Left cardiac atrium (tissue), 4 donors: ENCODE measurements at regions of chr2 and their contacts with region 1.

Region 1: GRCh38 chr2:98502556-98503335 is 58.1 kb downstream of the INPP4A start:
- DNase-seq: no peak
- ATAC-seq: no peak

Region 2: DNA sequence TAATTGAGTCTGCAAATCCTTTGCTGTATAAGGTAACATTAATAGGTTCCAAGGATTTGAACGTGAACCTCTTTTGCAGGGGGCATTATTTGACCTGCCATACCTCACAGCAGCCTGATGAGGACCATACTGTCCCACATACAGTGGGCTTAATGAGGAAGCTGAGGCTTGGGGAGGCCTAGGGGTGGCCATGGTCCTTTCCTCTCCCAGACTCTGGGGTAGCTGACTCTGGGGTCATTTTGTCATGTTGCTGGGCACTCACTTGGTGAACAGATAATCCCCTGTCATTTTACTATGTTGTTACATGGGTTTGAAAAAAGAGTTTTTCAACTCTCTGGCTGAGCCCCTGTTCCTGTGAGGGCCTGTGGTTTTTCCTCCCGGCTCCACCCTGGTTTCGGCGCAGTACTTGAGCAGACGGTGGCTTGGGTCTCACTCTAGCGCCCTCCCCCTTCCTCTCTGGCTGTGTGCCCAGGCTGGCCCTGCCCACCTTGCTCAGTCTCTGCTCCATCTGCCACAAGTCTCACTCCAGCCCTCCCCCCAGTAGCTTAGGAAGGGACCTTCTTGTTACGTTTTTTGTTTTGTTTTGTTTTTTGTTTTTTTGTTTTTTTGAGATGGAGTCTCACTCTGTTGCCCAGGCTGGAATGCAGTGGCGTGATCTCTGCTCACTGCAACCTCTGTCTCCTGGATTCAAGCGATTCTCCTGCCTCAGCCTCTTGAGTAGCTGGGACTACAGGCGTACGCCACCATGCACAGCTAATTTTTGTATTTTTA is 37.1 kb before region 1 on chr2:
- intact Hi-C with region 1: loop called in 1 of 2 experiments (anchors 5 kb)
- DNase-seq: peak; percentile 83
- ATAC-seq: peak; percentile 72 to 75

Region 3: DNA sequence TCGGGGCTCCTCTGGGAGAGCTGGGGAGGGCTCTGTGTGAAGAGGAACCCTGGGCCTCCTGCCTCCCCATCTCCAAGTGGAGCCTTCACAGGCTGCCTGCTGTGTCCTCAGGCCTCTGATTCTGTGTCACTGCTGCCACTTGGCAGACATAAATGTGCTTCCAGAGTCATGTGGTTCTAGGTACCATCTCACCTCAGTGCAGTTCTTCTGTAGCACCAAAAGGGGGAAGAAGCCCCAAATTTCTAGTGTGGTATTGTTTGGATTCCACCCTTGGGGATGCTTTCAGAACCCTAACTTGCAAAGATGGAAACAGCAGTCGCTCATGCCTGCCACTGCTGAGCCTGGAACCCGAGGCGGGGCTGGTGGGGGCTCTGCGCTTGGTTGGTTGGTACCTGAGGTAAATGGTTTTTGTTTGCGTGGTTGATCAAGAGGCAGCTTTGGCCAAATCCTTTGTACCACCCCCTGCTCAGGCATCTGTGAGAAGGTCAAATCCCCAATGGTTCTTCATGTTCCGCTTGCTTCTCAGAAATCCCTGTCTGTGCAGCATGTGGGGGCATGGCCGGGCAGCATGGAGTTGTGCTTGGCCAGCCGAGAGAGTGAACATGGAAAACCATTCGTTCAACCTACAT is 78.0 kb after region 1 on chr2:
- intact Hi-C with region 1: no loop called
- DNase-seq: no peak
- ATAC-seq: no peak

Region 4: GRCh38 chr2:98771721-98772524 is 269.2 kb after region 1 on chr2:
- intact Hi-C with region 1: no loop called
- DNase-seq: no peak
- ATAC-seq: peak; percentile 20 to 40

Region 5: DNA sequence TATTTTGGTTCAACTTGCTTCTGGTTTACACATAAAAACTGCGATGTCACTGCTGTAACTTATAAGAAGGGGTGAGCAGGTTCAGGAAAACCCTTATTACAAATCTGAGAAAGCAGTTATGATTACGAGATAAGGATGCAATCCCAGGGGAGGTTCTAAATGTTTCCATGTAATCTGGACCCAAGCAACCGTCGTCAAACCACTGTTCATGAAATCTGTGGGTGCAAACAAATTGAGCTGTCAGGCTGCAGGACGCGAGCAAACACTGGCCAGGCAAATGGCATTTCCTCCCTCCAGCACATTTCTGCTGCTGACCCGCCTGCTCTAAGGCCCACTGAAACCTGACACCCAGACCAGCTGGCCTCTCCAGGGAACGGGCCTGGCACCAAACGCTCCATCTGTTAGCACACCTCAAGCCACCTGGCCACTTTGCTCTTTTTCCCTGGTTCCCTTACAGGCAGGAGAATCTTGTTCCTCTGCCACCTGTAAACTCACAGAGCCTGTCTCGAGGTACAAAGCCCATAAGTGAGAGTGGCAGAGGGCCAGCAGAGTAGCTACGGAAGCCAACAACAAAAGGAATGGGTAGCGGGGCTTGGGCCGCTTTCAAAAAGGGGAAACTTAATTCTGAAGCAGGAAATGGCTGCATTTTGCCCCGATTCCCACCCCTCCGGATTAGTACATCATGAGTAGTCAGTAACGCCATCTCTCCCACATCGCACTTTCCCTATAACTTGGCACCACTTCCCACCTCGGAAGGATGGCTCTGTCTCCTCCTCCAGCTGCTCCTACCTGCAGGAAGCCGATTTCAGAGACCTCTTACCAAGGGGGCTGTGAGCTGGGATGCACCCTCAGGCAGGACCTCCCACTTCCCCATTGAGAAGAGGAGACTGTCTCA is 406.8 kb after region 1 on chr2:
- intact Hi-C with region 1: no loop called
- DNase-seq: no peak
- ATAC-seq: peak; percentile 30 to 62